PC-9 (cell line): ENCODE measurements at regions of chr1 and their contacts with region 1.

Region 1: GRCh38 chr1:1441002-1441888 is 5.8 kb downstream of the VWA1 start:
- DNase-seq: peak in 1 of 2 experiments; percentile 48
- H3K4me3 ChIP-seq: no peak overlapping the region
- H3K27ac ChIP-seq: no peak overlapping the region
- H3K4me1 ChIP-seq: peaks cover 5% of the 10 kb centered on the region; the same call in 1 of the 2 replicates
- H3K27me3 ChIP-seq: no peaks in the 10 kb centered on the region
- CTCF ChIP-seq: peak; percentile 80

Region 2: DNA sequence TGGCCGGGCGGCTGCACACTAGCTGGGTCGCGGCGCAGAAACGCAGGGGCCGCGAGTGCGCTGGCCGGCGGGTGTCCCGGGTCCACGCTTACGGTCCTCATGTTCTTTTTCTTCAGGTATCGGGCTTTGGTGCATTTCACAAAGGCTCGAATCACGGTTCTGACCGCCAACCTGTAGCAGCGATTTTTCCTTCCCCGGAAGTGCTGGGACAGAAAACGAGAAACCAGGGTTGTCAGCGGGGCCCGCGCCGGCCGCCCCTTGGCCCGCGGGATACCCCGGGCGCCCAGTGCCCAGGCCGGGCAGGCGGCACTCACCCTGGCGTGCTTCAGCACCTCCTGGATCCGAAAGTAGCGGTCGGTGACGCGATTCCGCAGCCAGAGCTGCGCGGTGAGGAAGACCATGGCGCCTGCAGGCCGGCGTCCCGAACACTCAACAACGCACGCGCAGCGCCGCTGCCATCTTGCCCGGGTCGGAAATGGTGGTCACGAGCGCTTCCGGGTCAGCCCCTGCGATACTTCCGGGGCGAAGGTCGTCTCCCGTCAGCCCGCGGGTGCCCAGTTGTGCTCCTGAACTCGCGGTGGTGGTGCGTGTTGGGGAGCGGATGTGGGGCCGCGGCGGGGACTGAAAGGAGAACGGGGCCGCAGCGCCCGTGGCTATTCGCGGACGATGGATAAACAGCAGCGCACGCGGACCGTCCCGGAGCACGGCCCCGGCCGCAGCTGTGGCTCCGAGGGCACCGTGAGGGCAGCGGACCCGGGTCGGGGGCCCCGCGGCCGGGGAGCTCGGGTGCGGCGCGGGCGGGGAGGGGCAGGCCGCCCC is 34.2 kb before region 1 on chr1 and contains the start of gene MRPL20:
- CTCF ChIA-PET with region 1: no interaction called
- POLR2A ChIA-PET with region 1: no interaction called
- intact Hi-C with region 1: loop called (anchors 2 kb)
- DNase-seq: peak; percentile 78 to 85
- H3K4me3 ChIP-seq: peak within 1 kb of the TSS; percentile 80
- H3K27ac ChIP-seq: peak within 1 kb of the TSS; percentile 44
- H3K4me1 ChIP-seq: peaks cover 19% of the 10 kb centered on the region
- H3K27me3 ChIP-seq: no peaks in the 10 kb centered on the region
- CTCF ChIP-seq: no peak
- total RNA-seq, gene MRPL20: 90.5 and 90.8 TPM in 2 replicates

Region 3: GRCh38 chr1:1471389-1472052 is 30.3 kb after region 1 on chr1 and contains the start of gene ATAD3B:
- CTCF ChIA-PET with region 1: no interaction called
- POLR2A ChIA-PET with region 1: interaction called, 10 read pairs
- intact Hi-C with region 1: no loop called
- DNase-seq: peak; percentile 79 to 88
- H3K4me3 ChIP-seq: peak within 1 kb of the TSS; percentile 90
- H3K27ac ChIP-seq: peak within 1 kb of the TSS; percentile 68
- H3K4me1 ChIP-seq: peaks cover 13% of the 10 kb centered on the region; the same call in 1 of the 2 replicates
- H3K27me3 ChIP-seq: no peaks in the 10 kb centered on the region
- CTCF ChIP-seq: no peak
- total RNA-seq, gene ATAD3B: 28.5 and 32.8 TPM in 2 replicates